Vagina (tissue), 2 donors: ENCODE measurements at regions of chr2 and their contacts with region 1.

Region 1: GRCh38 chr2:47323009-47323821 is 79.7 kb upstream of the MSH2 start:
- DNase-seq: no peak
- H3K4me3 ChIP-seq: no peak overlapping the region
- H3K27ac ChIP-seq: no peak overlapping the region
- H3K4me1 ChIP-seq: no peaks in the 10 kb centered on the region
- H3K27me3 ChIP-seq: no peaks in the 10 kb centered on the region
- CTCF ChIP-seq: peak; percentile 65 to 91 (median 87)
- POLR2A ChIP-seq: no peak

Region 2: GRCh38 chr2:46915811-46916630 is 407.2 kb before region 1 on chr2:
- intact Hi-C with region 1: loop called (anchors 10 kb)
- DNase-seq: peak in 1 of 2 donors; percentile 96
- H3K4me3 ChIP-seq: peak overlapping the region; percentile 85 to 100
- H3K27ac ChIP-seq: peak overlapping the region; percentile 94
- H3K4me1 ChIP-seq: peaks cover 30% of the 10 kb centered on the region
- H3K27me3 ChIP-seq: no peaks in the 10 kb centered on the region
- CTCF ChIP-seq: no peak
- POLR2A ChIP-seq: no peak

Region 3: DNA sequence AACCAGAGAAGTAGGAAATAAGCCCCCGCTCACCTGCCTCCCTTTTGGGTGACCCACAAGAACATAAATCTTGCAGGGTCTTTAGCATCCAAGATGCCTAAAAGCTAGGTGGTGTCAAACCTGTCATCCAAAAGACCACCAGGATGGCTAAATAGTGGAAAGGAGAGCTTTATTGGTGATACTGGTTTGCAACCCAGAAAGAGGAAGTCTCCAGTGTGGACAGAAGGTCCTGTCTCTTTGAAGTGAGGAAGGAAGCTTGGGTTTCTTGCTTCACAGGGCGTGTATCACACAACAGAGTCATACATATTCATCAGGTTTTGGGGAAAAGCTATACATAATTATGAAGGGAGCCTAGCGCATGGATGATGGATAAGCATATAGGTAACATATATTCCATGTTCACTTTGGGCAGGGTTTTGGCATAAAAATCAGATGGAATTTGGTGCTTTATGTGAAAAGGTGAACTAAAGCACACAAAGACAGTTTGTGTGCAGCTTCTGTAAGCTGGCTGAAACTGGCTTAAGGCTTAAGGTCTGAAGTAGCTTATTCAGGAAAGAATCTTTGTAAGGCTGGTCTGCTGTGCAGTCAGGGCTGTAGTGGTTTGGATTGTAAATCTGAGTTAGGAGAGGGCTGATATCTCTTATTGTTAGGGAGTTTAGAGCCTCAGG is 22.5 kb before region 1 on chr2:
- intact Hi-C with region 1: no loop called
- DNase-seq: no peak
- H3K4me3 ChIP-seq: no peak overlapping the region
- H3K27ac ChIP-seq: no peak overlapping the region
- H3K4me1 ChIP-seq: no peaks in the 10 kb centered on the region
- H3K27me3 ChIP-seq: no peaks in the 10 kb centered on the region
- CTCF ChIP-seq: no peak
- POLR2A ChIP-seq: no peak

Region 4: GRCh38 chr2:47344890-47345589 is 21.8 kb after region 1 on chr2:
- intact Hi-C with region 1: no loop called
- DNase-seq: no peak
- H3K4me3 ChIP-seq: peak overlapping the region; percentile 28 to 47
- H3K27ac ChIP-seq: no peak overlapping the region
- H3K4me1 ChIP-seq: peaks cover 15% of the 10 kb centered on the region
- H3K27me3 ChIP-seq: no peaks in the 10 kb centered on the region
- CTCF ChIP-seq: peak in 1 of 3 experiments; percentile 16
- POLR2A ChIP-seq: no peak

Region 5: GRCh38 chr2:47528874-47529273 is 205.7 kb after region 1 on chr2:
- intact Hi-C with region 1: no loop called
- DNase-seq: no peak
- H3K4me3 ChIP-seq: no peak overlapping the region
- H3K27ac ChIP-seq: no peak overlapping the region
- H3K4me1 ChIP-seq: no peaks in the 10 kb centered on the region
- H3K27me3 ChIP-seq: no peaks in the 10 kb centered on the region
- CTCF ChIP-seq: no peak
- POLR2A ChIP-seq: no peak